Activated CD4-positive, alpha-beta T cell treated with anti-CD3 and anti-CD28 coated beads for 36 hours (primary cell): ENCODE measurements at regions of chr7 and their contacts with region 1.

Region 1: GRCh38 chr7:55572378-55573233 is at the start of gene VOPP1:
- DNase-seq: peak; percentile 78
- ATAC-seq: peak; percentile 31
- H3K4me3 Mint-ChIP-seq: peak within 1 kb of the TSS; percentile 89
- H3K27ac Mint-ChIP-seq: peak within 1 kb of the TSS; percentile 94
- H3K4me1 Mint-ChIP-seq: peaks cover 67% of the 10 kb centered on the region
- H3K27me3 Mint-ChIP-seq: no peaks in the 10 kb centered on the region
- total RNA-seq, gene VOPP1: 63.7 to 64.2 TPM

Region 2: DNA sequence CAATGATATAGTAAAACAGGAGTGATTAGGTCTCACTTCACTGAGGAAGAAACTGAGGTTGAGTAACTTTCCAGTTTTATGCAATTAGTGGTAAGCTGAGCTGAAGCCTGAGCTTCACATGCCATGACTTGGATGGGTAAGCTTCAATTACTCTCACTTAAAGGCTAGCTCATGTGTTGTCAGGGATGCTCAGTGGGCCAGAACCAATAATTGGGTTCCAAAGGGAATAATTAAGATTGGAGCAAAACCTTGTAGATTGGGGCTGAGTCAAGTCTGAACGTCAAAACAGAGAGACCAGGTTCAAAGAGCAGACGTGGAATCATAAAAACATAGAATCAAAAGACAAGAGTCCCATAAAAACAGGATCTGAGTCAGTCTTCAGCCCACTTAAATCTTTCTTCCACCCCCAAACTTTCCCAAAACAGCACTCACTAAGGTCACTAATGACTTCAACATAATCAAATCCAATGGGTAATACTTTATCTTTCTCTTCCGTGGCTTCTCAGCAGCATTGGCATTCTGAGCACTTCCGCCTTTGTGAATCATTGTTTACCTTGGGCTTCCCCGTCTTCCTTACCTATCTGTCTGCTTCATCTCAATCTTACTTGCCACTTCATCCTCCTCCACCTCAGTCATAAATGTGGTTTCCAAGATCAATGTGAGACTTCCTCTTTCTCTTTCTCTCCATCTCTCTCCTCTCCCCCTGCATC is 576.8 kb before region 1 on chr7:
- CTCF ChIA-PET with region 1: no interaction called
- POLR2A ChIA-PET with region 1: no interaction called
- intact Hi-C with region 1: loop called in 1 of 2 experiments (anchors 5 kb)
- DNase-seq: peak; percentile 58
- ATAC-seq: peak; percentile 90
- H3K4me3 Mint-ChIP-seq: no peak overlapping the region
- H3K27ac Mint-ChIP-seq: peak overlapping the region; percentile 69
- H3K4me1 Mint-ChIP-seq: peaks cover 34% of the 10 kb centered on the region
- H3K27me3 Mint-ChIP-seq: peaks cover 22% of the 10 kb centered on the region

Region 3: GRCh38 chr7:55365675-55366460 is 206.7 kb before region 1 on chr7:
- CTCF ChIA-PET with region 1: no interaction called
- POLR2A ChIA-PET with region 1: no interaction called
- intact Hi-C with region 1: loop called (anchors 1 to 5 kb)
- DNase-seq: peak; percentile 96
- ATAC-seq: peak; percentile 88
- H3K4me3 Mint-ChIP-seq: peak overlapping the region; percentile 94
- H3K27ac Mint-ChIP-seq: peak overlapping the region; percentile 97
- H3K4me1 Mint-ChIP-seq: peaks cover 25% of the 10 kb centered on the region
- H3K27me3 Mint-ChIP-seq: no peaks in the 10 kb centered on the region

Region 4: DNA sequence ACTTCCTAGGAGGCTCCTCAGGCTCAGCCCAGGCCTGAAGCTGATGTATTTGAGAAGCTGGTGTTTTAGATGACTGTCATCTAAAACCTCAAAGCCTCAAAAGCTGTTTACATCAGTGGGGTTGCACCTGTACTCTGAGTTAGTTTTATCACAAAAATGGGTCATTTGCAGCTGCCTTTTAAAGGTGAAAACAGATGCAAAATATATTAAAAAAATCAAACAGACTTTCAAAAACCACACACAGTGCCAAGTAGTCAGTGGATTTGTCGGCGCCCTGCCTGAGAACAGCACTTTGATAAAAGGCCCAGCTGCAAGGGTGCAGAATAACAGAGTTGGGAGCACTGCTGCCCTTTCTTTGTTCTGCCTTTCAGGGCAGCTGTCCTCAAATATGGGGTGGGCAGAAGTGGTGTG is 103.3 kb before region 1 on chr7:
- CTCF ChIA-PET with region 1: no interaction called
- POLR2A ChIA-PET with region 1: interaction called, 4 read pairs
- intact Hi-C with region 1: loop called in 1 of 2 experiments (anchors 5 kb)
- DNase-seq: peak; percentile 27
- ATAC-seq: peak; percentile 86
- H3K4me3 Mint-ChIP-seq: no peak overlapping the region
- H3K27ac Mint-ChIP-seq: peak overlapping the region; percentile 49
- H3K4me1 Mint-ChIP-seq: peaks cover 63% of the 10 kb centered on the region
- H3K27me3 Mint-ChIP-seq: no peaks in the 10 kb centered on the region

Region 5: GRCh38 chr7:55515569-55516279 is 56.9 kb before region 1 on chr7:
- CTCF ChIA-PET with region 1: interaction called, 6 read pairs
- POLR2A ChIA-PET with region 1: interaction called, 7 read pairs
- intact Hi-C with region 1: loop called (anchors 1 kb)
- DNase-seq: peak; percentile 50
- ATAC-seq: peak; percentile 25
- H3K4me3 Mint-ChIP-seq: peak overlapping the region; percentile 2
- H3K27ac Mint-ChIP-seq: peak overlapping the region; percentile 69
- H3K4me1 Mint-ChIP-seq: peaks cover 66% of the 10 kb centered on the region
- H3K27me3 Mint-ChIP-seq: no peaks in the 10 kb centered on the region

Region 6: DNA sequence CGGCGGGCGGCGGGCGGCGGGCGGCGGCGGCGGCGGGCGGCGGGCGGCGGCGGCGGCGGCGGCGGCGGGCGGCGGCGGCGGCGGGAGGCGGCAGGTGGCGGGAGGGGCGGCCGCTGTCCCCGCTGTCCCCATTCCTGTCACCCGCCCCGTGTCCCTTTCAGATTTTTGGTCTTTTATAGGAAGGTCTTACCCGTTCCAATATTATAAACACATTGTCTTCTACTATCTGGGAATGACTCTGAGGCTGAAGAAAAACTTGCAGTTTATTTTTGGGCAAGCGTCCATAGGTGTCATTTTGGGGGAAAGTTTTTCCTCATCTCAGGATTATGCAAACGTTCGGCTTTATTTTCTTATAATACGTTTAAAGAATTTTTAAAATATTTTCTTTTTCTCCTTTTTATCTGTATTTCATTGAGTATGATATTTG is 315.2 kb after region 1 on chr7:
- CTCF ChIA-PET with region 1: no interaction called
- POLR2A ChIA-PET with region 1: no interaction called
- intact Hi-C with region 1: loop called in 1 of 2 experiments (anchors 2 kb)
- DNase-seq: peak; percentile 21
- ATAC-seq: no peak
- H3K4me3 Mint-ChIP-seq: peak overlapping the region; percentile 80
- H3K27ac Mint-ChIP-seq: peak overlapping the region; percentile 82
- H3K4me1 Mint-ChIP-seq: peaks cover 5% of the 10 kb centered on the region
- H3K27me3 Mint-ChIP-seq: no peaks in the 10 kb centered on the region

Region 7: GRCh38 chr7:56051339-56052191 is 479.0 kb after region 1 on chr7 and contains the starts of genes CCT6A and PSPH:
- CTCF ChIA-PET with region 1: no interaction called
- POLR2A ChIA-PET with region 1: no interaction called
- intact Hi-C with region 1: loop called in 1 of 2 experiments (anchors 1 kb)
- DNase-seq: peak; percentile 95
- ATAC-seq: peak; percentile 95
- H3K4me3 Mint-ChIP-seq: peak within 1 kb of the TSS; percentile 96
- H3K27ac Mint-ChIP-seq: peak within 1 kb of the TSS; percentile 95
- H3K4me1 Mint-ChIP-seq: peaks cover 49% of the 10 kb centered on the region
- H3K27me3 Mint-ChIP-seq: no peaks in the 10 kb centered on the region
- total RNA-seq, gene CCT6A: 182 to 237 TPM
- total RNA-seq, gene PSPH: 24.4 to 30.3 TPM